Naive thymus-derived CD4-positive, alpha-beta T cell (primary cell): ENCODE measurements at regions of chr3 and their contacts with region 1.

Region 1: DNA sequence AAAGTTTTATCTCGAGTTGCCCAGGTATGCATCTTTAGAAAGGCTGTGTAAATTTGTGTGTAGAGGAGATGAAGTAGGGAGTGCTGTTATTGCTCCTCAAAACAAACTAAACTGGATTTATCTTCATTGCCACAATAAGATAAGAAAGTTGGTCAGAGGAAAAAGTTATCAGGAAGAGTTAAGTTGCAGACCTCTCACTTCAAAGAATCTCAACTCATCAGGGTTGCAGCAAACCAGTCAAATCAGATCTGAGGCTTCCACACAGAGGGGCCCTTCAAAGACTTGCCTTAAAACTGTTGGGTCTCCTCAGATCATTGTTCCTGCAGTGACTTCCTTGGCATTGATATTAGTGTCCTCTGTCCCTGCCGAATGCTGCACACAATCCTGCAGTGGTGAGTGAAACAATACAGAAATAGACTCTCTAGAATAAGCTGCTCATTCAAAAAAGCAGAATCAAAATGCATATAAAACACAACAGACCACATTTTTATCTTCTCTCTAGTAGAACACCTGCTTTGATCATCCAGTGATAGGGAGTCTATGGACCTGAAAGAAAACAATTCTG is 191.2 kb upstream of the CBLB start:
- DNase-seq: no peak
- ATAC-seq: no peak
- H3K4me3 ChIP-seq: no peak overlapping the region
- H3K4me3 Mint-ChIP-seq: no peak overlapping the region
- H3K27ac ChIP-seq: no peak overlapping the region
- H3K27ac Mint-ChIP-seq: peak overlapping the region in 1 of 9 donors; percentile 19
- H3K4me1 ChIP-seq: no peaks in the 10 kb centered on the region
- H3K4me1 Mint-ChIP-seq: peaks cover 0 to 15% (median 7%) of the 10 kb centered on the region in 7 donors
- H3K27me3 ChIP-seq: no peaks in the 10 kb centered on the region
- H3K27me3 Mint-ChIP-seq: no peaks in the 10 kb centered on the region

Region 2: DNA sequence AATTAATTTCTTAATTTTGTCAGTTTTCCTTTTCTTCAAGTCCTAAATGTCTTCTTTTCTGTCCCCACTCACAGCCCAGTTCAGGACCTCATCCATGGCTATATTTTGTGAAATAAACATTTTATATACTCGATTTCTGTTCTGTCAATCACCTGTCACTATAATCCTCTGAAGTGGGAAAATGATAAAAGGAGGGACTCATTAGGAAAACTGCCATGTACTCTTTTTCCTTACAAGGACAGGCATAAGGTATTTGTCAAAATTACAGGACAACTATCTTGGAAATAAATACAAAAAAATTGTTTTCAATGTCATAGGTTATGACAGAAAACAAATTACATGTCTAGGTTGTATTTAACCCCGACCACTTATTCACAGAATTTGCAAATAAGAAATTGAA is 48.9 kb after region 1 on chr3:
- CTCF ChIA-PET with region 1: no interaction called
- POLR2A ChIA-PET with region 1: no interaction called
- intact Hi-C with region 1: loop called in 1 of 2 experiments (anchors 5 kb)
- DNase-seq: no peak
- ATAC-seq: no peak
- H3K4me3 ChIP-seq: no peak overlapping the region
- H3K4me3 Mint-ChIP-seq: no peak overlapping the region
- H3K27ac ChIP-seq: no peak overlapping the region
- H3K27ac Mint-ChIP-seq: peak overlapping the region in 5 of 9 donors; percentile 11 to 59 (median 44)
- H3K4me1 ChIP-seq: peaks cover 3 to 9% of the 10 kb centered on the region in 2 donors
- H3K4me1 Mint-ChIP-seq: peaks cover 6 to 21% (median 13%) of the 10 kb centered on the region in 7 donors
- H3K27me3 ChIP-seq: no peaks in the 10 kb centered on the region
- H3K27me3 Mint-ChIP-seq: no peaks in the 10 kb centered on the region

Region 3: DNA sequence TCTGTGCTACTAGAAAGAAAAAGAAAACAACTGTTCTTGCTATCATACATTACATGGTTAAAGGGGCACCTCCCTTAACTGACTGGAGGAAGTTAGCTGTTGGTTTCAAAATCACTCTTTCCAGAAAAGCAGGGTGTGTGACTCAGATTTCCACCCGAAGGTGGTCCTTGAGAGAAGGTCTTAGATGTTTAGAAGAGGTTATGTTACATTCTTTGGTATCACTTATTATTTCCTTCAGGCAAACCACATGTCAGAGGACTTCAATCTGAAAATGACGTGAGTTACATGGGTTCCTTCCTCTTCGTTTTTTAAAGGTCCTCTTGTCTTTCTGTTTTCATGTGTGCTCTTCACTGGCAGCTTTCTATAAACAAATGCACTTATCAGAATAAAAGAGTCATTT is 116.7 kb after region 1 on chr3:
- CTCF ChIA-PET with region 1: no interaction called
- POLR2A ChIA-PET with region 1: no interaction called
- intact Hi-C with region 1: no loop called
- DNase-seq: peak in 8 of 9 donors; percentile 59 to 86 (median 78)
- ATAC-seq: peak; percentile 94
- H3K4me3 ChIP-seq: peak overlapping the region; percentile 28
- H3K4me3 Mint-ChIP-seq: peak overlapping the region; percentile 1 to 79 (median 73)
- H3K27ac ChIP-seq: peak overlapping the region; percentile 43
- H3K27ac Mint-ChIP-seq: peak overlapping the region; percentile 50 to 91 (median 87)
- H3K4me1 ChIP-seq: peaks cover 28 to 32% of the 10 kb centered on the region in 2 donors
- H3K4me1 Mint-ChIP-seq: peaks cover 33 to 61% (median 56%) of the 10 kb centered on the region in 7 donors
- H3K27me3 ChIP-seq: no peaks in the 10 kb centered on the region
- H3K27me3 Mint-ChIP-seq: no peaks in the 10 kb centered on the region

Region 4: GRCh38 chr3:106542101-106542769 is 482.2 kb after region 1 on chr3:
- CTCF ChIA-PET with region 1: no interaction called
- POLR2A ChIA-PET with region 1: no interaction called
- intact Hi-C with region 1: no loop called
- DNase-seq: no peak
- ATAC-seq: no peak
- H3K4me3 ChIP-seq: no peak overlapping the region
- H3K4me3 Mint-ChIP-seq: no peak overlapping the region
- H3K27ac ChIP-seq: no peak overlapping the region
- H3K27ac Mint-ChIP-seq: no peak overlapping the region
- H3K4me1 ChIP-seq: no peaks in the 10 kb centered on the region
- H3K4me1 Mint-ChIP-seq: no peaks in the 10 kb centered on the region
- H3K27me3 ChIP-seq: no peaks in the 10 kb centered on the region
- H3K27me3 Mint-ChIP-seq: no peaks in the 10 kb centered on the region